CD4-positive, alpha-beta T cell (primary cell): ENCODE measurements at regions of chr7 and their contacts with region 1.

Region 1: DNA sequence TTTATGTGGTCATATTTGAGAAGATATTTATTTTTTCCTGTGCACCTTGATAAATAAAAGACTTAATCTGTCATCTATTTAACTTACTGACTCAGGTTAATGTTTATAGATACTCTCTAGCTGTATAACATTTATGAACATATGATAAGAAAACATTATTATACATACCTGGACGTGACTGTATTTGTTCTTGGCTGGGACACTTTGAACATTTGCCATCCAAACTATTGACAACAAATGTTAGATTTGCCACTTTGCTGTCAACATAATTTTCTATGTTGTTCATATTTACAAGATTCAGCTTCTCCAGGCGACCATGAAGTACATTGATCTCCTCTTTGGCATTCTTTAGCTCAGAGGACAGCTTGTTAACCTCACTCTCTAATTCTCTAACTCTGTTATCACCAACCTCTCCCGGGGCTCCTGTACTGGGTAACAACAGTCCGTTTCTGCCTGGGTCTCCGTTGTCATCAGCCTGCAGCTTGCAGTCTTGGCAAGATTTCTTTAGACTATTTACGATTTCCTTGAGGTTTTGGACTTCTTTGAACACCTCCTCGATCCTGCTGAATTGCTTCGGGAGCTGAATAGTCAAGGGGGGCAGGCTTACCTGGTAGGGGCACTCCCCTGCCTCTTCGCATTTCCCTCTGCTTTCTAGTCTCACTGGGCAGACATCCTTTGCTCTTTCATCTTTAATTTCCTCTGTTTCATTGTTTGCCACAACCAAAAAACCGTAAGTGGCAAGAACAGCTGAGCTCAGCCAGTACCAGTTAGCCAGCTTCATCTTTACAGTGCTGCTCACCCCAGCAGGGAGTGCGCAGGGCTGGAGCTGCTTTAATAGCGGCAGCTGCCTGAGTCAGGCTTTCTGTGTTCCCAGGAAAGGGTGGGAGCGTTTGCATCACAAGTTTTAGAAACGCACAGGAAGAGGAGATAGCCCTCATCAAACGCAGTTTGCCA is at the start of gene FGL2:
- DNase-seq: peak; percentile 8 to 67 (median 20)
- ATAC-seq: peak; percentile 89
- H3K4me3 ChIP-seq: peak within 1 kb of the TSS; percentile 66
- H3K4me3 Mint-ChIP-seq: peak within 1 kb of the TSS; percentile 83
- H3K27ac ChIP-seq: peak within 1 kb of the TSS; percentile 14 to 65
- H3K27ac Mint-ChIP-seq: peak within 1 kb of the TSS; percentile 67
- H3K4me1 ChIP-seq: peaks cover 11% of the 10 kb centered on the region
- H3K4me1 Mint-ChIP-seq: peaks cover 36% of the 10 kb centered on the region
- H3K27me3 ChIP-seq: no peaks in the 10 kb centered on the region
- H3K27me3 Mint-ChIP-seq: no peaks in the 10 kb centered on the region
- CTCF ChIP-seq: no peak
- total RNA-seq, gene FGL2: 1.5 to 1.6 TPM

Region 2: GRCh38 chr7:77439572-77439971 is 240.3 kb after region 1 on chr7:
- CTCF ChIA-PET with region 1: no interaction called
- POLR2A ChIA-PET with region 1: no interaction called
- intact Hi-C with region 1: loop called in 1 of 2 experiments (anchors 10 kb)
- DNase-seq: peak in 1 of 14 experiments; percentile 17
- ATAC-seq: no peak
- H3K4me3 ChIP-seq: no peak overlapping the region
- H3K4me3 Mint-ChIP-seq: no peak overlapping the region
- H3K27ac ChIP-seq: no peak overlapping the region
- H3K27ac Mint-ChIP-seq: no peak overlapping the region
- H3K4me1 ChIP-seq: no peaks in the 10 kb centered on the region
- H3K4me1 Mint-ChIP-seq: no peaks in the 10 kb centered on the region
- H3K27me3 ChIP-seq: no peaks in the 10 kb centered on the region
- H3K27me3 Mint-ChIP-seq: no peaks in the 10 kb centered on the region
- CTCF ChIP-seq: no peak